OCI-LY7 (cell line): ENCODE measurements at regions of chr6 and their contacts with region 1.

Region 1: GRCh38 chr6:53794720-53795253 is at the start of gene LRRC1:
- DNase-seq: peak; percentile 94
- H3K4me3 ChIP-seq: peak within 1 kb of the TSS; percentile 84
- H3K27ac ChIP-seq: peak within 1 kb of the TSS; percentile 70
- H3K4me1 ChIP-seq: peaks cover 24% of the 10 kb centered on the region
- CTCF ChIP-seq: no peak
- total RNA-seq, gene LRRC1: 7.0 and 8.2 TPM in 2 replicates

Region 2: GRCh38 chr6:53064726-53065215 is 730.0 kb before region 1 on chr6:
- CTCF ChIA-PET with region 1: no interaction called
- POLR2A ChIA-PET with region 1: no interaction called
- intact Hi-C with region 1: loop called (anchors 2 kb)
- DNase-seq: peak; percentile 98
- H3K4me3 ChIP-seq: peak overlapping the region; percentile 78
- H3K27ac ChIP-seq: peak overlapping the region; percentile 72
- H3K4me1 ChIP-seq: peaks cover 48% of the 10 kb centered on the region
- CTCF ChIP-seq: peak; percentile 6; the same call in 1 of the 2 replicates

Region 3: GRCh38 chr6:53532942-53533341 is 261.8 kb before region 1 on chr6:
- CTCF ChIA-PET with region 1: no interaction called
- POLR2A ChIA-PET with region 1: interaction called, 11 read pairs
- intact Hi-C with region 1: no loop called
- DNase-seq: no peak
- H3K4me3 ChIP-seq: no peak overlapping the region
- H3K27ac ChIP-seq: no peak overlapping the region
- H3K4me1 ChIP-seq: no peaks in the 10 kb centered on the region
- CTCF ChIP-seq: no peak

Region 4: GRCh38 chr6:53544470-53545308 is 250.1 kb before region 1 on chr6 and contains the start of gene GCLC:
- CTCF ChIA-PET with region 1: no interaction called
- POLR2A ChIA-PET with region 1: interaction called, 3 read pairs
- intact Hi-C with region 1: loop called (anchors 1 kb)
- DNase-seq: peak; percentile 97
- H3K4me3 ChIP-seq: peak within 1 kb of the TSS; percentile 96
- H3K27ac ChIP-seq: peak within 1 kb of the TSS; percentile 66
- H3K4me1 ChIP-seq: peaks cover 34% of the 10 kb centered on the region
- CTCF ChIP-seq: peak; percentile 75
- total RNA-seq, gene GCLC: 14.3 and 16.7 TPM in 2 replicates

Region 5: GRCh38 chr6:53956068-53956711 is 161.4 kb after region 1 on chr6:
- CTCF ChIA-PET with region 1: no interaction called
- POLR2A ChIA-PET with region 1: interaction called, 3 read pairs
- intact Hi-C with region 1: loop called (anchors 5 kb)
- DNase-seq: peak; percentile 5
- H3K4me3 ChIP-seq: no peak overlapping the region
- H3K27ac ChIP-seq: no peak overlapping the region
- H3K4me1 ChIP-seq: no peaks in the 10 kb centered on the region
- CTCF ChIP-seq: peak; percentile 46; the same call in 1 of the 2 replicates

Region 6: GRCh38 chr6:54115966-54116365 is 321.2 kb after region 1 on chr6:
- CTCF ChIA-PET with region 1: no interaction called
- POLR2A ChIA-PET with region 1: no interaction called
- intact Hi-C with region 1: no loop called
- DNase-seq: no peak
- H3K4me3 ChIP-seq: no peak overlapping the region
- H3K27ac ChIP-seq: no peak overlapping the region
- H3K4me1 ChIP-seq: no peaks in the 10 kb centered on the region
- CTCF ChIP-seq: no peak

Region 7: DNA sequence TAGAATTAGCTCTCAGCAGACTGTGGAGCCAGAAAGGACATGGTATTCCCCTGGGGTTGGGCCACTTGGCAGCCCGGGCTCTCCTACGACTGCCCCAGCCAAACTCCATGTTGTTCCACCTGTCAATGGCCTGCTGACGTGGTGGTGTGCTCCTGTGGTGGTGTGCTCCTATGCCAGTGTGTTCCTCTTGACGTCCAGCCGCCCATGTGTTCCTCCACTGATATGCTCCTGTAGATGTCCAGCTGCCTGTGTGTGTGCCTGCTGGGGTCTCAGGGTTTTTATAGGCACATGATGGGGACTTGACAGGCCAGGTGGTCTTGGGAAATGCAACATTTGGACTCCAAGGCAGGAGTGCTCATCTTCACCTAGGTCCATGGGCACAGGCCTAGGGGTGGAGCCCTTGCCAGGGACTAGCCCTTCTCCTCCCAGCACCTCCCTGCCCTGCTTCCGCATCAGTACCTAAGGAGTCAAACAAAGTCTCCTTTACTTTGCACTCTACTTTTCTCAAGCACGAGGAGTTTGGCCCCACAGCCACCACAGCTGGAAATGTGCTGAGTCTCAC is 647.0 kb after region 1 on chr6:
- CTCF ChIA-PET with region 1: no interaction called
- POLR2A ChIA-PET with region 1: no interaction called
- intact Hi-C with region 1: no loop called
- DNase-seq: no peak
- H3K4me3 ChIP-seq: no peak overlapping the region
- H3K27ac ChIP-seq: no peak overlapping the region
- H3K4me1 ChIP-seq: no peaks in the 10 kb centered on the region
- CTCF ChIP-seq: no peak